ENCODE measurements at regions of chr14 and their contacts with region 1.

Region 1: GRCh38 chr14:94001501-94002396 is 4.6 kb downstream of the CCDC197 start:
- DNase-seq: peak; percentile 35 to 85 (median 64)

Region 2: GRCh38 chr14:93939304-93940229 is 62.2 kb before region 1 on chr14:
- intact Hi-C with region 1: loop called (anchors 2 kb)
- DNase-seq: peak; percentile 60 to 92 (median 83)

Measured in head of caudate nucleus (tissue), 42 donors.